CD14-positive monocyte (primary cell): ENCODE measurements at regions of chr15 and their contacts with region 1.

Region 1: GRCh38 chr15:26767169-26767670 is 5.6 kb downstream of the GABRB3 start:
- DNase-seq: no peak
- H3K4me3 ChIP-seq: no peak overlapping the region
- H3K4me3 Mint-ChIP-seq: no peak overlapping the region
- H3K27ac ChIP-seq: no peak overlapping the region
- H3K27ac Mint-ChIP-seq: no peak overlapping the region
- H3K4me1 ChIP-seq: no peaks in the 10 kb centered on the region
- H3K4me1 Mint-ChIP-seq: no peaks in the 10 kb centered on the region
- H3K27me3 ChIP-seq: peaks cover 16 to 18% of the 10 kb centered on the region in 2 donors
- H3K27me3 Mint-ChIP-seq: peaks cover 14 to 21% (median 19%) of the 10 kb centered on the region in 3 donors
- CTCF ChIP-seq: no peak

Region 2: GRCh38 chr15:26806144-26806543 is 38.9 kb after region 1 on chr15:
- intact Hi-C with region 1: loop called in 1 of 2 experiments (anchors 10 kb)
- DNase-seq: no peak
- H3K4me3 ChIP-seq: no peak overlapping the region
- H3K4me3 Mint-ChIP-seq: no peak overlapping the region
- H3K27ac ChIP-seq: no peak overlapping the region
- H3K27ac Mint-ChIP-seq: no peak overlapping the region
- H3K4me1 ChIP-seq: no peaks in the 10 kb centered on the region
- H3K4me1 Mint-ChIP-seq: no peaks in the 10 kb centered on the region
- H3K27me3 ChIP-seq: no peaks in the 10 kb centered on the region
- H3K27me3 Mint-ChIP-seq: peaks cover 0 to 2% (median 0%) of the 10 kb centered on the region in 3 donors
- CTCF ChIP-seq: no peak